ENCODE measurements at regions of chr5 and their contacts with region 1.

Region 1: DNA sequence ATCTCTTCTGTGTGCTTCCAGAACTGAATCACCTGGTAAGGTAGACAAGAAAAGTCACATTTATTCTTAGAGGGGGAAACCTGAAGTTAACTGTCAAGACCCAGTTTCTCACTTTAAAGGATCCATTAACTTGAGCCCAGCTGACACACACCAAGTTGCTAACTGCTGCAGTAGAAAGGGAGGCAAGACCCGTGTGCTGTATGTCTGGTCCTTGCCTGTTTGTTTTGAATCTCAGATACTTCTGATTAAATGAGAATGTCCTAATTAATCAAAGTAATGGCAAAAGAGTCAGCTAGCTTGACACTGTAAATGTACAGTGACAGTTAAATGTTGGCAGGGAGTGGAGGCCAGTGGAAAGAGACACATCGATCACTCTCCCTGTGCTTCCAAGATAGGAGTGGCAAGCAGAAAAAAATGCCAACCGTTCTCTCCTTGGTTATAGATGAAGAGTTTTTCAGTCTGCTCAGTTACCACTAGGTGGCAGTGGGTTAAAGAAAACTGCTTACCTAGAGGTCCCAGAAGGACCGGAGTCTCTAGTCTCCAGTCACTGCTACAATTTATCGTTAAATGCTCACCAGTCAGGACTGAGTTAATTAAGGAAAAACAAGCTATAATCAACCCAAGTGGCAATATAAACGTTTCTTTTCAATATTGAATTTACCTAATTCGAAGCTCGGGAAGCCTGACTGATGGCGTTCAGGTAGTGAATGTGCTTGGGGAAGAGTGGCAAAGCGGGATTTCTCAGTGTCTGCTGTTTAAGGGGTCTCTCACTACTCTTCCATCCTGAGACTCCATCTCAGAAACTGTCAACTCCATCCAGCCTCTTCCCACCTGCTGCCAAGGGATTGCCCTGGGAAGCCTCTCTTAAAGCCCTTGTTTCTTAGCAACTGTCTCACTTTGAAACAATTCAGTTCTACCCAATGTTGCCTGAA is 18.4 kb downstream of the LSM11 start:
- DNase-seq: peak; percentile 66
- CTCF ChIP-seq: peak; percentile 75

Region 2: DNA sequence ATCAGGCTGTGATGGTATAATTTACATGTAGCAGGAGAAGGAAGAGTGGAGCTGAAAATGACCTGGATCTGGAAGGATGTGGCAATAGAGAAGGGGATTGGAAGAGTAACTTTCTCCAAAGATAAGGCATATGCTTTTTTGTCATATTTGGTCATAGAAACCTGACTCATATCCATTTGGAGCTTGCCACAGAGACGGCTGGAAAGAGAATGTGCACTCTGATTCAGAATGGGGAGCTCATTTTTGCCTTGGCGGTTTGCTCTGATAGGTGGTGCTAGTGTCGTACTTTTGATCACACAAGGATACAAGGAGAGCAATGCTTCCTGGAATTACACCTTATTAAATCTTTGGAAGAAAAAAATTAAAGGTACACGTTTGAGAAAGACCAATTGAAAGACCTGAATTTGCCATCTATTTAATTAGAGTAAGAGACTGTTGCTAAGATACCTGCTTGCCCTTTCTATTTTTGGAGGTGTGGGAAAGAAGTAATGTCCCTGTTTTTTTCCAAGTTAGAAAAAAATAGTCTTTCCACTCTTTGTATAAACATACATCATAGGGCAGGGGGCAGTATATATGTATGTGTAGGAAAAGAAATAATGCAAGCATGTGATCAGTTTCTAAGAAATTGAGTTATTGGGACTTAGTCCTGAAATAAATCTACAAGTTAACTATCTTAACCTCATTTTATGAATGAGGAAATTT is 13.0 kb before region 1 on chr5:
- CTCF ChIA-PET with region 1: interaction called, 42 read pairs
- POLR2A ChIA-PET with region 1: no interaction called
- DNase-seq: no peak
- CTCF ChIP-seq: no peak

Region 3: DNA sequence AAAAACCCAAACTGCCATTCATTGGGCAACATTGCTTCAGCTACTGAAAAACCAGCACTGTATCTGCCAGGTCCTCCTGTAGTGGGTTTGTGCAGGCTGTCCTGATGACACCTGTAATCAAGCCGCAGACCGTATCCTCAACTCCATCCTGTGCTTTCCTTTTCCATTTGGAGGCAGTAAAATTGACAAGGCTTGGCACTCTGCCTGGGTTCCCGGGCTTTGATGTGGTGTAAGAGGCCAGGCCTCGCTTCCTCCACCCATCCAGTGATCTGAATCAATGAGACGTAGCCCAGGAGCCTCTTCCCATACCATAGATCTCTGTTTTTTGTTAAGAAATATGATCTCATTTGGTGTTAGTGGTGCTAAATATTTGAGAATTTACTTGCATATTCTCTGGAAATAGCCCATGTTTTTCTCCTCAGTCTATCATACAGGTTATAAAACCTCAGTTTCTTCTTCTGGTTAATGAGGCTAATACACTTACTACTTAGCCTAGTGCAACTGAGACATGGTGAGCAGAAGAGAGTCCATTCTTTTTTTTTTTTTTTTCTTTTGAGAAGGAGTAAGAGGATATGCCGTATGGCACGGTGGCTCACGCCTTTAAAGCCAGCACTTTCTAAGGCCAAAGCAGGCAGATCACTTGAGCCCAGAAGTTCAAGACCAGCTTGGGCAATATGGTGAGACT is 16.3 kb after region 1 on chr5:
- CTCF ChIA-PET with region 1: interaction called, 52 read pairs
- POLR2A ChIA-PET with region 1: no interaction called
- DNase-seq: no peak
- CTCF ChIP-seq: no peak

Region 4: GRCh38 chr5:157994906-157995519 is 233.1 kb after region 1 on chr5:
- CTCF ChIA-PET with region 1: interaction called, 32 read pairs
- POLR2A ChIA-PET with region 1: no interaction called
- DNase-seq: peak; percentile 63
- CTCF ChIP-seq: peak; percentile 52

Region 5: GRCh38 chr5:158560170-158560569 is 798.2 kb after region 1 on chr5:
- CTCF ChIA-PET with region 1: no interaction called
- POLR2A ChIA-PET with region 1: interaction called, 13 read pairs
- DNase-seq: peak; percentile 62
- CTCF ChIP-seq: no peak

Region 6: GRCh38 chr5:159133041-159133741 is 1371.2 kb after region 1 on chr5:
- CTCF ChIA-PET with region 1: interaction called, 11 read pairs
- POLR2A ChIA-PET with region 1: no interaction called
- DNase-seq: peak; percentile 41
- CTCF ChIP-seq: peak; percentile 60